CD4-positive, alpha-beta memory T cell (primary cell): ENCODE measurements at regions of chr17 and their contacts with region 1.

Region 1: DNA sequence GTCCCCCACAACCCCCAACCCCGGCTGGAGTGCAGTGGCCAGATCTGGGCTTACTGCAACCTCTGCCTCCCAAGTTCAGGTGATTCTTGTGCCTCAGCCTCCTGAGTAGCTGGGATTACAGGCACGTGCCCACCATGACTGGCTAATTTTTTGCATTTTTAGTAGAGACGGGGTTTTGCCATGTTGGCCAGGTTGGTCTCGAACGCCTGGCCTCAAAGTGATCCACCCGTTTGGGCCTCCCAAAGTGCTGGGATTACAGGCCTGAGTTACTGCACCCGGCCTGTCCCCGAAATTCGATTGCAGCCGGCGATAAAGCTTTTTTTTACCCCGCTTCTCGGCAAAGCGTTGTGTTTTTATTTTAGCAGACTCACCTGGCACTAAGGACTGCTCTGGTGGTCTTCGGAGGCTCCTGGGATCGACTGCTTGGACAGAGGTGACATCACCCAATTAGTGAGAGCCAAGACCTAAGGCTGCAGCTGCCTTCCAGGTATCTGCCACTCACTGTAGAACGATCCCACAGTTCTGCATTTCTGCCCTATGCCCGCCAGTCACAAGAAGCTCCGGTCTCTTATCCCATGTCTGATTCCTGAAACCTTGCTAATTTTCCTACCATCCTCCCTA is 82.2 kb upstream of the ARL4D start:
- DNase-seq: peak in 3 of 5 donors; percentile 20 to 53 (median 20)
- H3K4me3 ChIP-seq: no peak overlapping the region
- H3K4me3 Mint-ChIP-seq: peak overlapping the region in 6 of 8 donors; percentile 5 to 62 (median 44)
- H3K27ac ChIP-seq: no peak overlapping the region
- H3K27ac Mint-ChIP-seq: peak overlapping the region in 2 of 7 donors; percentile 65 to 79
- H3K4me1 ChIP-seq: no peaks in the 10 kb centered on the region
- H3K4me1 Mint-ChIP-seq: peaks cover 5 to 17% (median 11%) of the 10 kb centered on the region in 4 donors
- H3K27me3 ChIP-seq: no peaks in the 10 kb centered on the region
- H3K27me3 Mint-ChIP-seq: no peaks in the 10 kb centered on the region

Region 2: GRCh38 chr17:43170766-43171585 is 145.7 kb before region 1 on chr17 and contains the start of gene NBR1:
- CTCF ChIA-PET with region 1: interaction called, 6 read pairs
- POLR2A ChIA-PET with region 1: interaction called, 57 read pairs
- intact Hi-C with region 1: loop called (anchors 2 kb)
- DNase-seq: peak; percentile 97 to 99 (median 97)
- H3K4me3 ChIP-seq: peak within 1 kb of the TSS; percentile 80 to 85
- H3K4me3 Mint-ChIP-seq: no peak within 1 kb of the TSS
- H3K27ac ChIP-seq: peak within 1 kb of the TSS; percentile 99
- H3K27ac Mint-ChIP-seq: no peak within 1 kb of the TSS
- H3K4me1 ChIP-seq: peaks cover 40% of the 10 kb centered on the region
- H3K4me1 Mint-ChIP-seq: peaks cover 16 to 36% (median 23%) of the 10 kb centered on the region in 4 donors
- H3K27me3 ChIP-seq: no peaks in the 10 kb centered on the region
- H3K27me3 Mint-ChIP-seq: no peaks in the 10 kb centered on the region
- total RNA-seq, gene NBR1: 90.3 to 93.2 TPM

Region 3: DNA sequence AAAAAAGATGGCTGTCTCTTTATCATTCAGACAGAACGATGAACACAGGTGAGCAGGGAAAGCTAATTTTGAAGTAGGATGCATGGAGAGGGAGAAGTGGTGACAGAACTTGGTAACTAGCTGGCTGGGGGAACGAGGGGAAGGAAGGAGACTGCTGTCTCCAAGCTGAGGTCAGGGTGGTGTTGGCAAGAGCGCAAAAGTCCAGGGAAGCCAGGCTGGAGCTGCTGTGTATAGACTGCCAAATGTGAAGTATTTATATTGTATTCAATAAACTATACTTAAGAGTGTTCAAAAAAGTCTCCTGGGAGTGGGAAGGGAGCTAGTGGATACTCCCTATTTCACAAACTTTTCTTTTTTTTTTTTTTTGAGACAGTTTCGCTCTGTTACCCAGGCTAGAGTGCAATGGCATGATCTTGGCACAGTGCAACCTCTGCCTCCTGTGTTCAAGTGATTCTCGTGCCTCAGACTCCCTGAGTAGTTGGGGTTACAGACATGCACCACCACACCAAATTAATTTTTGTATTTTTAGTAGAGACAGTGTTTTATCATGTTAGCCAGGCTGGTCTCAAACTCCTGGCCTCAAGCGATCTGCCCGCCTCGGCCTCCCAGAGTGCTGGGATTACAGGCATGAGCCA is 96.8 kb before region 1 on chr17:
- CTCF ChIA-PET with region 1: interaction called, 3 read pairs
- POLR2A ChIA-PET with region 1: interaction called, 128 read pairs
- intact Hi-C with region 1: no loop called
- DNase-seq: no peak
- H3K4me3 ChIP-seq: no peak overlapping the region
- H3K4me3 Mint-ChIP-seq: peak overlapping the region in 1 of 8 donors; percentile 8
- H3K27ac ChIP-seq: no peak overlapping the region
- H3K27ac Mint-ChIP-seq: no peak overlapping the region
- H3K4me1 ChIP-seq: no peaks in the 10 kb centered on the region
- H3K4me1 Mint-ChIP-seq: peaks cover 0 to 19% (median 5%) of the 10 kb centered on the region in 4 donors
- H3K27me3 ChIP-seq: no peaks in the 10 kb centered on the region
- H3K27me3 Mint-ChIP-seq: no peaks in the 10 kb centered on the region

Region 4: GRCh38 chr17:43338886-43339516 is 22.4 kb after region 1 on chr17:
- CTCF ChIA-PET with region 1: interaction called, 208 read pairs
- POLR2A ChIA-PET with region 1: interaction called, 31 read pairs
- intact Hi-C with region 1: loop called (anchors 2 kb)
- DNase-seq: peak; percentile 45 to 63 (median 53)
- H3K4me3 ChIP-seq: no peak overlapping the region
- H3K4me3 Mint-ChIP-seq: no peak overlapping the region
- H3K27ac ChIP-seq: no peak overlapping the region
- H3K27ac Mint-ChIP-seq: no peak overlapping the region
- H3K4me1 ChIP-seq: peaks cover 2% of the 10 kb centered on the region
- H3K4me1 Mint-ChIP-seq: peaks cover 2 to 16% (median 7%) of the 10 kb centered on the region in 4 donors
- H3K27me3 ChIP-seq: no peaks in the 10 kb centered on the region
- H3K27me3 Mint-ChIP-seq: peaks cover 0 to 5% of the 10 kb centered on the region in 2 donors

Region 5: DNA sequence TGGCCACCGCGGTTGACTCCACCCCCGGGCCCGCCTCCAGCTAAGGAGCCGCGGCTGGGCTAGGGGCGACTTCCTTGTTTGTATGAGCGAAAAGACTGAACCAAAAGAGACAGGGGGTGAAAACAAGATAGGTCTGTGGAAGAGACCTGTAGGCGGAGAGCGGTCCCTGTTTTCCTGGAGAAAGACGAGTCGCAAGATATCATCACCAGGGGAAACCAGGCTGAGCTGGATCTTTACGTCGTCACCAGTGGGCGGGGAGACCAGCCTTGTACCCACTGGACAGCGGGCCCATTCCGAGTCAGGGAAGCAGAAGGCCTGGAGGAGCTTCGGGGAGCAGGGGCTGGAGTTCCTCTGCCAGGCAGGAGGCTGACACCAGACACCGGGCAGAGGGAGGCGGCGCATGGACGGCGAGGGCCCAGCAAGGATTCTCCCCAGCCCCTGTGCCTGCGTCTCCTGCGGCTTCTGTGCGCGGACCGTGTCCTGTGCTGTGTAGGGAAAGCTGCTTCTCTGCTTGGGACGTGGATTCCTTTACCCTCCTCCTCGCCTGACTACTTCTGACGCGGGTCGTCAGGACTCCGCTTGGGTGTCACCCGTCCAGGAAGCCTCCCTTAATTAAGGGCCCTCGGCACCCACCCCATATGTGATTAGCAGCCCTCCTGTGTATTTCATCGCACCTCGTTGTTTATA is 71.9 kb after region 1 on chr17:
- CTCF ChIA-PET with region 1: interaction called, 4 read pairs
- POLR2A ChIA-PET with region 1: interaction called, 25 read pairs
- intact Hi-C with region 1: no loop called
- DNase-seq: peak; percentile 92 to 95 (median 93)
- H3K4me3 ChIP-seq: peak overlapping the region; percentile 73 to 86
- H3K4me3 Mint-ChIP-seq: peak overlapping the region; percentile 92 to 100 (median 97)
- H3K27ac ChIP-seq: peak overlapping the region; percentile 93
- H3K27ac Mint-ChIP-seq: peak overlapping the region; percentile 97 to 100 (median 98)
- H3K4me1 ChIP-seq: peaks cover 19% of the 10 kb centered on the region
- H3K4me1 Mint-ChIP-seq: peaks cover 12 to 35% (median 27%) of the 10 kb centered on the region in 4 donors
- H3K27me3 ChIP-seq: no peaks in the 10 kb centered on the region
- H3K27me3 Mint-ChIP-seq: no peaks in the 10 kb centered on the region

Region 6: GRCh38 chr17:43431714-43432523 is 115.3 kb after region 1 on chr17:
- CTCF ChIA-PET with region 1: no interaction called
- POLR2A ChIA-PET with region 1: no interaction called
- intact Hi-C with region 1: no loop called
- DNase-seq: no peak
- H3K4me3 ChIP-seq: no peak overlapping the region
- H3K4me3 Mint-ChIP-seq: no peak overlapping the region
- H3K27ac ChIP-seq: no peak overlapping the region
- H3K27ac Mint-ChIP-seq: peak overlapping the region in 1 of 7 donors; percentile 46
- H3K4me1 ChIP-seq: no peaks in the 10 kb centered on the region
- H3K4me1 Mint-ChIP-seq: no peaks in the 10 kb centered on the region
- H3K27me3 ChIP-seq: no peaks in the 10 kb centered on the region
- H3K27me3 Mint-ChIP-seq: peaks cover 14 to 19% of the 10 kb centered on the region in 2 donors

Region 7: DNA sequence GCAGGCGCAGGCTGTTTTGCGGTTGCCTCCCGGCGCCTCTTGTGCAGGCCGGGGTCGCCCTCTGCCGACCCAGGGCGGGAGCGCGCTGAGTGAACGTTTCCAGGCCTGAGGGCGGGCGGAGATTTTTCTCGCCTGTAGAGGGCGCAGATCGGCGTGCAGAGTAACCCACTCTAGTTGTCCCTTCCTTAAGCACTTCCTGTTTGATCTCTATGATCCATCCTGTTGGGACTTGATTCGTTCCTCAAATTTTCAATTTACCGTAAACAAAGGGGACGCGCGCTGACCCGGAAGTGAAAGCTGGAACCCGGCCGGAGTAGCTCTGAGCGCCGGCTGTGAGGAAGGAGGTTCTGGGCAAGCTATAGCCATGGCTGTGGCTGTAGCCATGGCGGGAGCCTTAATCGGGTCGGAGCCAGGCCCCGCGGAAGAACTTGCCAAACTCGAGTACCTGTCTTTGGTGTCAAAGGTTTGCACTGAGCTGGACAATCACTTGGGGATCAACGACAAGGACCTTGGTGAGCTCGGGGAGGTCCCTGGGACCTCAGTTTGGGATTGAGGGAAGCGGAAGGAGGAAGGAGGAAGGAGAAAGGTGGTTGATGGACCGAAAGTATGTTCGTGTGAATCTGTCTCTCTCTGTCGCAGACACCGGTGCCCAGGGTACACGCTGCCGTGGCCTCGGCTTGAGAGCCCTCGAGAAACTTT is 167.2 kb after region 1 on chr17 and contains the start of gene DHX8:
- CTCF ChIA-PET with region 1: interaction called, 3 read pairs
- POLR2A ChIA-PET with region 1: interaction called, 19 read pairs
- intact Hi-C with region 1: no loop called
- DNase-seq: peak; percentile 97 to 99 (median 98)
- H3K4me3 ChIP-seq: peak within 1 kb of the TSS; percentile 84 to 98
- H3K4me3 Mint-ChIP-seq: peak within 1 kb of the TSS; percentile 96 to 100 (median 100)
- H3K27ac ChIP-seq: peak within 1 kb of the TSS; percentile 78
- H3K27ac Mint-ChIP-seq: peak within 1 kb of the TSS; percentile 93 to 100 (median 99)
- H3K4me1 ChIP-seq: peaks cover 25% of the 10 kb centered on the region
- H3K4me1 Mint-ChIP-seq: peaks cover 17 to 39% (median 29%) of the 10 kb centered on the region in 4 donors
- H3K27me3 ChIP-seq: no peaks in the 10 kb centered on the region
- H3K27me3 Mint-ChIP-seq: peaks cover 0 to 1% of the 10 kb centered on the region in 2 donors
- total RNA-seq, gene DHX8: 75.8 to 78.2 TPM